ENCODE measurements at regions of chr2 and their contacts with region 1.

Region 1: DNA sequence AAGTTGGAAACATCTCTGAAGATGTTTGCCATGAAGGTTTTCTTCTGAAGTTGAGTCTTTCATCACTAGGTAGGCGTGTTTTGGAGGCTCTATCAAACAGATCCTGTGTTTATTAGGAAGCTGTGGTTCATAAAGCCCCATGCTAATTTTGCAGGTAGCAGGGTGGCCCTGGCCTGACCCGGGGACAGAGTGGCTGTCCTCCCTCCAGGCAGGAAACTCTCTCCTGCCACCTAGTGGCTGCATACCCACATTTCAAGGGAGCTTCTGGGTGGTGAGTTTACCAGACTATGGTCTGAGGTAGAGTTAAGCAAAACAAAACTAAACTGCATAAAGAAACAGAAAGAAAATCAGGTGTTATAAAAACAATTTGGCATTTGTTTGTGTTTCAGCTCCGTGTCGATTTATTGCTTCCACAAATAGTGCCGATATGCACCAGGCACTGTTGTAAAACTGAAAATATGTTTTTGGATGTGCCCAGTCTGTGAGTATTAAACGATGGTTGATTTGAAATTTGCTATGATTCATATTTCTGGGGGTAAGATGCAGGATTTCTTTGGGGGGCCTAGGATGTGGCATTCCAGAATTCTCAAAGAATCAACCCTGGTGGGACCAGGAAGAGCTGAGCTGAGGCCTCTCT is 26.0 kb upstream of the IL37 start:
- DNase-seq: peak; percentile 83
- CTCF ChIP-seq: peak; percentile 94

Region 2: DNA sequence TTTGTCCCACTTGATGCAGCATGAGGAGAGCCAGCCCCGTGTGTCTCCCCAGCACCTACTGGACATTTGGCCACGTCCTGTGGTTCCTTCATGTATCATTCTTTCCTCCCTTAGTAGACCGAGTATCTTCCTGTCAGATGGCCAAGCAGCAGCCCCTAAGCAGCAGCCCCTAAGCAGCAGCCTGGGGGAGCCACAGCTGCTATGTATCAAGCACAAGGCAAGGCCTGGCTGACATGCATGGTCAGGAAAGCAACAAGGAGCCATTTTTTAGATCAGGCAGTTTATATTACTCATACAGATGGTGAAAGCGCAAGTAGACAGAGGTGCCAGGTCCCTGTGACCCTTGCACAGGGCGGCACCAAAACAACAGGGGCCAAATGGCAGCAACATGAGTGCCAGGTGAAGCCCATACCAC is 278.5 kb before region 1 on chr2:
- CTCF ChIA-PET with region 1: interaction called, 11 read pairs
- POLR2A ChIA-PET with region 1: no interaction called
- DNase-seq: no peak
- CTCF ChIP-seq: no peak

Region 3: DNA sequence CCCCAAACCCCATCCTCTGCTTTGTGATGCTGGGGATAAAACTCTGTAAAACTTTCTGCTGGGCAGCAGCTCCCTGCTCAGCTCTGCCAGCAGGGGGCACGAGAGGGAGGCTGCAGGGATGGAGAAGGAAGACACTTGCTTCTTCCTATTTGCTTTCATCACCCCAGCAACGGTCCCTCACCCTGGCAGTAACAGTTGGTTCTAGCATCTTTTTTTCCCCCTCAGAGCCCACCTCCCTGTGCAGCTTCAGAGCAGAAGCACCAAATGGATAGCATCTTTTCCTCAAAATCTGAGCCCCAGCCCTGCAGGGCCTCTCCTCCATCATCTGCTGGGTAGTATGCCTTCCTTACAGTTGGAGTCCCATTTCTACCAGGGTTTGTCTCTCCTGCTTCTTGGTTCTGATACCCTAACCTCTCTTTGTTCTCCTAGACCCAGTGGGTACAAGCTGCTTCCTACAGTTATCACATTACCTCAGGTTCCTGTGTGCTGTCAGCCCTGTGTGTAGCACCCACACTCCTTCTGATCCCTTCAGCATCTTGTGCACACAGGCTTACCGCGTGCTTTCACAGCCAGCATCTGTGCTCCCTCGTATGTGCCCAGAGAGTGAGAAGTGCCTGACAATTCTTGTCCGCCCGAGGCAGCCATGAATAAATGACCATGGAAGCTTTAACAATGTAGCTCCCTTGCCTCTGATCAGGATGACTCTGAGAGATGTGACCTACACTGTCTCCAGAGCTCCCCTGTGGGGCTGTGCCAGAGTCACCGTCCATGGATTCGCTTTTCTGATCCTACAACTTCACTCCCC is 135.0 kb before region 1 on chr2:
- CTCF ChIA-PET with region 1: interaction called, 275 read pairs
- POLR2A ChIA-PET with region 1: no interaction called
- DNase-seq: peak; percentile 79
- CTCF ChIP-seq: peak; percentile 96

Region 4: GRCh38 chr2:112811841-112812306 is 73.1 kb before region 1 on chr2:
- CTCF ChIA-PET with region 1: interaction called, 10 read pairs
- POLR2A ChIA-PET with region 1: no interaction called
- DNase-seq: no peak
- CTCF ChIP-seq: no peak

Region 5: DNA sequence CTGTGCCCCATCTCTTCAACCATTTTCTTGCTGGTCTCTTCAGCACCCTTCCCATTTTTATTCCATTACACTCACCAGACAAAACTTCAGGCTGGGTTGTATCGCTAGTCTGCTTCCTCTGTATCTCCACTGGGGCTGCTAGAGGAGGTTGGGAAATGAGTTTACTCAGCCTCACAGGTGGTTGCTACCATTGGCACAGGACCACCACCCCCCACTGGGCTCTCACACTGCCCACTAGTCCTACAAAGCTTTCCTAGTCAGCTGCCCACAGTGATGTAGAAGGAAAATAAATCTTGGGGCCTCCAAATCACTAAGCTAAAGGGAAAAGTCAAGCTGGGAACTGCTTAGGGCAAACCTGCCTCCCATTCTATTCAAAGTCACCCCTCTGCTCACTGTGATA is 36.2 kb before region 1 on chr2:
- CTCF ChIA-PET with region 1: interaction called, 12 read pairs
- POLR2A ChIA-PET with region 1: no interaction called
- DNase-seq: no peak
- CTCF ChIP-seq: no peak

Region 6: GRCh38 chr2:112906276-112906675 is 21.3 kb after region 1 on chr2:
- CTCF ChIA-PET with region 1: interaction called, 13 read pairs
- POLR2A ChIA-PET with region 1: no interaction called
- DNase-seq: no peak
- CTCF ChIP-seq: no peak

Region 7: GRCh38 chr2:112947374-112947773 is 62.4 kb after region 1 on chr2:
- CTCF ChIA-PET with region 1: interaction called, 33 read pairs
- POLR2A ChIA-PET with region 1: no interaction called
- DNase-seq: no peak
- CTCF ChIP-seq: no peak

Region 8: DNA sequence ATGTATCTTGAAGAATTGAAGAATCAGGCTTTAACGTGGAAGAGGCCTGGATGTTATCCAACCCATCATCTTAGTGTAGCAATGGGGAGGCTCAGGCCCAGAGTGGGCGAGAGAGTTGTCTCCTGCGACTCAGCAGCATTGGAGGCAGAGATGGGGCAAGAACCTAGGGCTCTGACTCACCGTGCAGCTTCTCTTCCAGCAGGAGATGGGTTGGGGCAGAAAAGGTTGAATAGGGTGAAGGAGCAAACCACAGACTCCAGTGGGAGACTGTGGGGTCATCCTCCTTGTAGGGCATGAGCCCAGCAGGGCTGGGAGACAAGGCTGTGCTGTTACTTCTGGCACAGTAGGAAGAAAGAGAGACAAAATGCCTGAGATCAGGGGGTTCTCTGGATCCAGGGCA is 175.4 kb after region 1 on chr2:
- CTCF ChIA-PET with region 1: no interaction called
- POLR2A ChIA-PET with region 1: no interaction called
- DNase-seq: no peak
- CTCF ChIP-seq: no peak